Activated CD8-positive, alpha-beta memory T cell treated with anti-CD3 and anti-CD28 coated beads, Interleukin-2, amount 10 ng/mL, durations not matched to agents 7 days and 5 days (primary cell): ENCODE measurements at regions of chr6 and their contacts with region 1.

Region 1: GRCh38 chr6:137975188-137975940 is 108.3 kb downstream of the TNFAIP3 start:
- DNase-seq: peak; percentile 60
- ATAC-seq: peak; percentile 83
- H3K4me3 Mint-ChIP-seq: peak overlapping the region; percentile 69
- H3K27ac Mint-ChIP-seq: peak overlapping the region; percentile 91
- H3K4me1 Mint-ChIP-seq: peaks cover 57% of the 10 kb centered on the region
- H3K27me3 Mint-ChIP-seq: no peaks in the 10 kb centered on the region

Region 2: DNA sequence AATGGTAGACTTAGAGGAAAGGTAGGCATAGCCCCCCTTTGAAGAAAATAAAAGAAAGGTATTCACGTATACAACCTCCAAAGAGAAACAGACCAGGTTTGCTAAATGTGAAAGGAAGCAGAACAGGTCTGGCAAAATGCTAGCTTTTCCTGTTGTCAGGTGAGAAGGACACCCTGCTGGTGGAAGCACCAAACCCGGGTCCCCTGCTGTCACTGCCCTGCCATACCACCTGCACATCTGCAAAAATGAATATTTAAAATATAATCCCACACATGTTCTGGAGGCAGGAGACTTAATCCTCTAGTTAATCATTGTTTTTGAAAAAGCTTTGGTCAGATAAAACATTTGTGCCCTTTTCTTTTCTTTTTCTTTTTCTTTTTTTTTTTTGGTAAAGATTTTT is 432.2 kb before region 1 on chr6:
- CTCF ChIA-PET with region 1: no interaction called
- DNase-seq: no peak
- ATAC-seq: no peak
- H3K4me3 Mint-ChIP-seq: no peak overlapping the region
- H3K27ac Mint-ChIP-seq: no peak overlapping the region
- H3K4me1 Mint-ChIP-seq: peaks cover 3% of the 10 kb centered on the region
- H3K27me3 Mint-ChIP-seq: peaks cover 15% of the 10 kb centered on the region

Region 3: GRCh38 chr6:137697267-137697938 is 278.0 kb before region 1 on chr6:
- CTCF ChIA-PET with region 1: interaction called, 13 read pairs
- DNase-seq: no peak
- ATAC-seq: peak; percentile 32
- H3K4me3 Mint-ChIP-seq: no peak overlapping the region
- H3K27ac Mint-ChIP-seq: peak overlapping the region; percentile 47
- H3K4me1 Mint-ChIP-seq: peaks cover 57% of the 10 kb centered on the region
- H3K27me3 Mint-ChIP-seq: no peaks in the 10 kb centered on the region

Region 4: DNA sequence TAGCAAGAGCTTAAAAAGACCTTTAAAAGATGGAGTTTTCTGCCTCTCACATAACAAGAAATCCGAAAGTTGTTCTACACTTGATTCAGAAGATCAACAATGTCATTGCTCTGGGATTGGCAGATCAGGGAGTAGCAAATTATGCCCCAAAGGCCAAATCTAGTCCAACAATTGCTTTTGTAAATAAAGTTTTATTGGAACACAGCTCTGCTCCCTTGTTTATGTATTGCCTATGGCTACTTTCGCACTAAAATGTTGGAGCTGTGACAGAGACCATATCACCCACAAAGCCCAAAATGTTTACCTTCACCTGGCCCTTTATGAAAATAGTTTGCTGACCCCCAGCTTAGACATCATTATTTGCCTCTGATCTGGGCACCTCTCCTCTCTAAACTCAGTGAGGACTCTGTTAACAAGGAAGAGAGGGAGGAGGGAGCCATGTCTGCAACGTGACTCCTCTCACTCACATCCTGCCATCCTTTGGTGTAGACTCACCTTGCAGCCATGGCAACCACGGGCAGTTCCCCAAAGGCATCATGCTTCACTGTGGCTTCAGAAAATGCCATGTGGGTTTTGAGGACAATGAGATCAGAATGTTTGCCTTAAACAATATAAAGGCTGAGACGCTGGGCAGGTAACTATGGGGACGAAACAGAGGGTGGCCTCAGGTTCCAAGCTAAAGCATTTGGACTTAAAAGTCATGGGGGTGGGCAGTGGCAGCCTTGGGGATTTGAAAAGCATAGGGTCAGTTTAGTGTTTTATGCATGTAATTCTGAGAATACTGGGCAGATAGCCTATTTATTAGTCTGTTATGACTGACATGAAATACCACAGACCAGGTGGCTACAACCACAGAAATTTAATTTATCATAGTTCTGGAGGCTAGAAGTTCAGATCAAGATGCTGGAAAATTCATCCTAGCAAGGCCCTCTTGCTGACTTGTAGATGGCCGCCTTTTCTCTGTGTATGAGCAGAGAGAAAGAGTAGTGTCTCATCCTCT is 258.0 kb before region 1 on chr6:
- CTCF ChIA-PET with region 1: interaction called, 12 read pairs
- DNase-seq: peak; percentile 92
- ATAC-seq: peak; percentile 63
- H3K4me3 Mint-ChIP-seq: no peak overlapping the region
- H3K27ac Mint-ChIP-seq: peak overlapping the region; percentile 94
- H3K4me1 Mint-ChIP-seq: peaks cover 52% of the 10 kb centered on the region
- H3K27me3 Mint-ChIP-seq: no peaks in the 10 kb centered on the region

Region 5: GRCh38 chr6:137873273-137873762 is 102.0 kb before region 1 on chr6:
- CTCF ChIA-PET with region 1: interaction called, 62 read pairs
- DNase-seq: peak; percentile 72
- ATAC-seq: peak; percentile 9
- H3K4me3 Mint-ChIP-seq: peak overlapping the region; percentile 79
- H3K27ac Mint-ChIP-seq: peak overlapping the region; percentile 93
- H3K4me1 Mint-ChIP-seq: peaks cover 78% of the 10 kb centered on the region
- H3K27me3 Mint-ChIP-seq: no peaks in the 10 kb centered on the region

Region 6: GRCh38 chr6:137919837-137920730 is 55.3 kb before region 1 on chr6:
- CTCF ChIA-PET with region 1: no interaction called
- DNase-seq: no peak
- ATAC-seq: no peak
- H3K4me3 Mint-ChIP-seq: no peak overlapping the region
- H3K27ac Mint-ChIP-seq: no peak overlapping the region
- H3K4me1 Mint-ChIP-seq: peaks cover 11% of the 10 kb centered on the region
- H3K27me3 Mint-ChIP-seq: no peaks in the 10 kb centered on the region

Region 7: GRCh38 chr6:137937834-137938233 is 37.5 kb before region 1 on chr6:
- CTCF ChIA-PET with region 1: interaction called, 16 read pairs
- DNase-seq: no peak
- ATAC-seq: no peak
- H3K4me3 Mint-ChIP-seq: no peak overlapping the region
- H3K27ac Mint-ChIP-seq: no peak overlapping the region
- H3K4me1 Mint-ChIP-seq: peaks cover 30% of the 10 kb centered on the region
- H3K27me3 Mint-ChIP-seq: no peaks in the 10 kb centered on the region

Region 8: GRCh38 chr6:137951064-137951597 is 24.2 kb before region 1 on chr6:
- CTCF ChIA-PET with region 1: interaction called, 32 read pairs
- DNase-seq: no peak
- ATAC-seq: no peak
- H3K4me3 Mint-ChIP-seq: no peak overlapping the region
- H3K27ac Mint-ChIP-seq: no peak overlapping the region
- H3K4me1 Mint-ChIP-seq: peaks cover 19% of the 10 kb centered on the region
- H3K27me3 Mint-ChIP-seq: no peaks in the 10 kb centered on the region

Region 9: DNA sequence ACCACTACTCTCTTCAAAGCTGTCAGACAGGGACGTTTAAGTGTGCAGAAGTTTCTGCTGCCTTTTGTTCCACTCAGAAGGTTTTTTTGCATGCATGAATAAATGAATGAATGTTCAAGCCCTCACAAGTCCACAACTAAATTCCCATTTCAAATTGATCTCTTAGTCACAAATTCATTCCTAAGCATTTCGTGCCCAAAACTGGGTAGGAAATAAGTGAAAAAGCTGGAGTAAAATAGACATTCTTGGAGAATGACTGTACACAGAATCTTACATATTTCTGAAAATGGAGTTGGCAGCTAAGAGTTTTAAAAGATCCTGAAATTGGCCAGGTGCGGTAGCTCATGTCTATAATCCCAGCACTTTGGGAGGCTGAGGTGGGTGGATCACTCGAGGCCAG is 14.3 kb after region 1 on chr6:
- CTCF ChIA-PET with region 1: no interaction called
- DNase-seq: no peak
- ATAC-seq: no peak
- H3K4me3 Mint-ChIP-seq: no peak overlapping the region
- H3K27ac Mint-ChIP-seq: no peak overlapping the region
- H3K4me1 Mint-ChIP-seq: no peaks in the 10 kb centered on the region
- H3K27me3 Mint-ChIP-seq: peaks cover 19% of the 10 kb centered on the region